Calu3 (cell line): ENCODE measurements at regions of chr17 and their contacts with region 1.

Region 1: GRCh38 chr17:36849871-36850348 is 87.4 kb upstream of the LHX1 start:
- DNase-seq: peak; percentile 50
- H3K4me3 Mint-ChIP-seq: no peak overlapping the region
- H3K27ac Mint-ChIP-seq: no peak overlapping the region
- H3K4me1 Mint-ChIP-seq: peaks cover 16% of the 10 kb centered on the region
- H3K27me3 Mint-ChIP-seq: peaks cover 38% of the 10 kb centered on the region
- CTCF ChIP-seq: peak; percentile 59

Region 2: GRCh38 chr17:36870720-36870999 is 20.8 kb after region 1 on chr17:
- CTCF ChIA-PET with region 1: no interaction called
- intact Hi-C with region 1: no loop called
- DNase-seq: no peak
- H3K4me3 Mint-ChIP-seq: no peak overlapping the region
- H3K27ac Mint-ChIP-seq: no peak overlapping the region
- H3K4me1 Mint-ChIP-seq: no peaks in the 10 kb centered on the region
- H3K27me3 Mint-ChIP-seq: peaks cover 95% of the 10 kb centered on the region
- CTCF ChIP-seq: no peak

Region 3: DNA sequence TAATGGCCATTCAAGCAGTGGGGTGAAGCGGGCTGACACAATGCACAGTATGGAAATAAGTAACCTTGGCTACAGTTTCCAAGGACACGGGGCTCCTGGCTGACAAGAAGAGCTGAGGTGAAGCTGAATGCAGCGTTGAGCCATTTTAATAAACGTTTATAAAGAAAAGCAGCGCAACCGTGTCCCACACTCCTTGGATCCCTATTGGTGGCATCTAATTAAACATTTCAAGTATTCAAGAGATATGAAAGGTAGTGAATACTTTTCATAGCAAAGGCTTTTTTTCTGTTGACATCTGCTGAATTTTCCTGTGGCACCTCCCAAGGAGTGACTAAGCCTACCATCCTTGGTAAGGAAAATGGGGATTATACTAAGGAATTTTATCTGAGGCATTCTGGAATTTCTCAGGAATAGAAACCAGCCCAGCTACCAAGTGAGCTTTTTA is 666.2 kb after region 1 on chr17:
- CTCF ChIA-PET with region 1: interaction called, 10 read pairs
- intact Hi-C with region 1: no loop called
- DNase-seq: no peak
- H3K4me3 Mint-ChIP-seq: no peak overlapping the region
- H3K27ac Mint-ChIP-seq: no peak overlapping the region
- H3K4me1 Mint-ChIP-seq: no peaks in the 10 kb centered on the region
- H3K27me3 Mint-ChIP-seq: no peaks in the 10 kb centered on the region
- CTCF ChIP-seq: no peak